ENCODE measurements at regions of chr3 and their contacts with region 1.

Region 1: DNA sequence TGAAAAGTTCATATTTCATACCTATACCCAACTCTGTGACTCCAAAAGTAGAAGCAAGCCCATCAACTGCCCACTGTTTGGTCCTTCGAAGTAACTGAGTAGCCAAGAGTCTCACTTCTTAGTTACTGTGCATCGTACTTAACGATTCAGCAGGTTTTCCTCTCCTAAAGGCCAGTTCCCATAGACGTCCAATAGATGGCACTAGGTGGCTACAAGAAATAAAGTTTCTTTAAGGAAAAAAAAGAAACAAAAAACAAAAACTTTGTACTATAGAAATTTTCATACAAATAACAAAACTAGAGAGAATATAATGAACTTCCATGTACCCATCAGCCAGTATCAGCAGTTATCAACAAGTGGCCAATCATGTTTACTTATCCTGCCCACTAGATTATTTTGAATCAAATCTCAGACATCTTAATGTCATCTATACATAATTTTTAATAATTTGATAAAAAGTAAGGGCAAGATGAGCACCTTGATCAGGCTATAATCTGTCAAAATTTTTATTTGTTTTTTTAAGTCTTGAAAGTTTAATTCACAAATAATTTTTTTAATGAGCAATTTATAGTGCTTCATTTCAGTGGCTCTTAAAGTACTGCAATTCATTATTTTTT is 63.8 kb upstream of the ACP3 start:
- DNase-seq: peak in 1 of 2 donors; percentile 19
- ATAC-seq: peak; percentile 74

Region 2: DNA sequence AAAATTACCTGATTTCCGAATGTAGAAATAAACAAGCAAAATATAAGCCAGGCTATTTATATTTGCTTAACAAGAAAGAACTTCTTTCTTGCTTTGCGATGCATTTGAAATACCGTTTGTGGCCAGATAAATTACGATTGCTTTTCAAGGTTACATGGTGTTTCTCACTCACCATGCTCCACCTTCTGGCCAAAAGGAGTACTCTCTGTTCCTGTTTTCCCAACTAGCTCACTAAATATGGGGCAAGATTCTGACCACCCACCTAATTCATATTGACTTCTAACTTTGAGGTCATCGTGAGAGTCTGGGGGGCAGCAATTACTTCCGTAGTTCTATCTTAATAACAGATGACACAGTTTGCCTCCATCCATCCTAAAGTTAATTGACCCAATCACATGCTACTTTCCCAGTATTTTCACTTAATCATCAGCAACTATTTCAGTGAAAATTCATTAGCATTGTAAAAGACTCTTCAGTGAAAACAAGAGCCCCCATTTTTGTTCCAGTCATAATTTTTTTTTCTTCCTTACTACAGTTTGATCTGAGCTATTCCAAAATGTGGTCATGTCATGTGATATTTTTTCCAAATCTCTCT is 89.7 kb after region 1 on chr3:
- intact Hi-C with region 1: loop called in 1 of 2 experiments (anchors 5 kb)
- DNase-seq: peak in 1 of 2 donors; percentile 17
- ATAC-seq: peak; percentile 88

Region 3: DNA sequence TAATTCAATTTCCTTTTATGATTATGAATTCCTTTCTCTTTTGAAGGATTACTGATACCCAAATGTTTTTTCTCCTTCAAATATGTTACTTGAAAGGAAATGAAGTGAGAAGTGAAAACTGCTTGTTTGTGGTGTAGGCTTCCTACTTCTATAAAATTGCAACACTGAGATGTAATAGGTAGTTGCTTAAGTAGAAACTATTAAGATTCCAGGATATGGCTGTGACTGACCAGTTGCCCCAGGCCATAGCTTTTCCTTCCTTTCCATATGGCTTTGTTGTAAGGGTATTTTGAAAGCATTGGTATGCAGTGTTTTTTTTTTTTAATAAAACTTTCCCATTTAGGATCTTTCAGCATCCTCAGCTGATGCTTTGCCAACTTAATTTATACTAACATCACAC is 192.4 kb after region 1 on chr3:
- intact Hi-C with region 1: no loop called
- DNase-seq: no peak
- ATAC-seq: no peak

Region 4: DNA sequence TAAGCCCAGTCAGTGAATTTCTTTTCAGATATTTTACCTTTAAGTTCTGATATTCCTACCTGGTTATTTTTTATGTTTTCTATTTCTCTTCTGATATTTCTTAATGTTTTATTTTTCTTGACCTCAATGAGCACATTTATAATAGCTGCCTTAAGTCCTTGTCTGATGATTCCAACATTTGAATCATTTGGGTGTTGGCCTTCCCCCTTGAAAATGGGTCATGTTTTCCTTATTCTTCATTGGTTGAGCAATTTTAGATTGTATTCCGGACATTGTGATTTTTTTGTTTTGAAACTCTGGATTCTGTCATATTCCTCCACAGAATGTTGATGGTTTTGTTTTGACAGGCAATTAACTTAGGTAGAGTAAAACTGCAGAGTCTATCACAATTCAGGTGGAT is 334.0 kb after region 1 on chr3:
- intact Hi-C with region 1: no loop called
- DNase-seq: no peak
- ATAC-seq: no peak